ENCODE measurements at regions of chr12 and their contacts with region 1.

Region 1: GRCh38 chr12:109713187-109713984 is at the start of gene FAM222A:
- DNase-seq: peak; percentile 98
- ATAC-seq: peak; percentile 81
- H3K4me3 ChIP-seq: peak within 1 kb of the TSS; percentile 78
- H3K27ac ChIP-seq: no peak within 1 kb of the TSS
- H3K4me1 ChIP-seq: peaks cover 26% of the 10 kb centered on the region
- H3K27me3 ChIP-seq: no peaks in the 10 kb centered on the region
- CTCF ChIP-seq: no peak
- total RNA-seq, gene FAM222A: 11.7 and 15.3 TPM in 2 replicates

Region 2: GRCh38 chr12:109573029-109573913 is 140.1 kb before region 1 on chr12 and contains the starts of genes MMAB and MVK:
- CTCF ChIA-PET with region 1: interaction called, 3 read pairs
- POLR2A ChIA-PET with region 1: no interaction called
- intact Hi-C with region 1: loop called (anchors 1 kb)
- DNase-seq: peak; percentile 100
- ATAC-seq: peak; percentile 96
- H3K4me3 ChIP-seq: peak within 1 kb of the TSS; percentile 81
- H3K27ac ChIP-seq: peak within 1 kb of the TSS; percentile 57
- H3K4me1 ChIP-seq: peaks cover 16% of the 10 kb centered on the region
- H3K27me3 ChIP-seq: no peaks in the 10 kb centered on the region
- CTCF ChIP-seq: no peak
- total RNA-seq, gene MMAB: 83.0 and 83.5 TPM in 2 replicates
- total RNA-seq, gene MVK: 47.8 and 52.2 TPM in 2 replicates

Region 3: GRCh38 chr12:109597795-109598427 is 115.5 kb before region 1 on chr12:
- CTCF ChIA-PET with region 1: interaction called, 7 read pairs
- POLR2A ChIA-PET with region 1: no interaction called
- intact Hi-C with region 1: loop called (anchors 1 kb)
- DNase-seq: peak; percentile 91
- ATAC-seq: peak; percentile 98
- H3K4me3 ChIP-seq: no peak overlapping the region
- H3K27ac ChIP-seq: no peak overlapping the region
- H3K4me1 ChIP-seq: no peaks in the 10 kb centered on the region
- H3K27me3 ChIP-seq: no peaks in the 10 kb centered on the region
- CTCF ChIP-seq: peak; percentile 98

Region 4: DNA sequence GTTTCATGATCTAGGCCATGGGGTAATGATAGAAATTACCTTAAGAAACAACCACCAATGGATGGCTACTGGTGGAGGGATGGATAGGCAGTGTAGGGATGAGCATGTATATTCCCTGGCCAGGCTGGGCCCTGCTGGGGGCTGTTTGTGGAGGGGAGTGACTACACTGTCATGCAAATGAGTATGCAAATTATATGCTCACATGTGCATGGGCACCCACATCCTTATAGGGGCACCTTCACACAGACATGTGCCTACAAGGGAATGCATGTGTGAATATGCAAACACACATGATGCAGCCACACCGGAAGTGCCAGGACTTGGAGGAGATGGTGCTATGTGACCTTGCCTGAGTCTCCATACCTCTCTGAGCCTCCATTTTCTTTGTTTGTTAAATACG is 39.5 kb before region 1 on chr12:
- CTCF ChIA-PET with region 1: no interaction called
- POLR2A ChIA-PET with region 1: no interaction called
- intact Hi-C with region 1: loop called (anchors 2 kb)
- DNase-seq: no peak
- ATAC-seq: no peak
- H3K4me3 ChIP-seq: no peak overlapping the region
- H3K27ac ChIP-seq: no peak overlapping the region
- H3K4me1 ChIP-seq: peaks cover 18% of the 10 kb centered on the region
- H3K27me3 ChIP-seq: no peaks in the 10 kb centered on the region
- CTCF ChIP-seq: no peak

Region 5: GRCh38 chr12:109681986-109682707 is 31.2 kb before region 1 on chr12:
- CTCF ChIA-PET with region 1: no interaction called
- POLR2A ChIA-PET with region 1: no interaction called
- intact Hi-C with region 1: loop called (anchors 1 kb)
- DNase-seq: peak; percentile 52
- ATAC-seq: peak; percentile 96
- H3K4me3 ChIP-seq: no peak overlapping the region
- H3K27ac ChIP-seq: peak overlapping the region; percentile 62
- H3K4me1 ChIP-seq: peaks cover 18% of the 10 kb centered on the region
- H3K27me3 ChIP-seq: no peaks in the 10 kb centered on the region
- CTCF ChIP-seq: no peak

Region 6: GRCh38 chr12:109775172-109775881 is 61.9 kb after region 1 on chr12:
- CTCF ChIA-PET with region 1: no interaction called
- POLR2A ChIA-PET with region 1: no interaction called
- intact Hi-C with region 1: loop called (anchors 2 kb)
- DNase-seq: peak; percentile 83
- ATAC-seq: peak; percentile 62
- H3K4me3 ChIP-seq: no peak overlapping the region
- H3K27ac ChIP-seq: no peak overlapping the region
- H3K4me1 ChIP-seq: peaks cover 27% of the 10 kb centered on the region
- H3K27me3 ChIP-seq: no peaks in the 10 kb centered on the region
- CTCF ChIP-seq: peak; percentile 99